MCF 10A (cell line): ENCODE measurements at regions of chr20 and their contacts with region 1.

Region 1: GRCh38 chr20:14979453-14979986 is 642.1 kb upstream of the FLRT3 start:
- DNase-seq: no peak
- H3K4me3 Mint-ChIP-seq: no peak overlapping the region
- H3K27ac Mint-ChIP-seq: no peak overlapping the region
- H3K4me1 Mint-ChIP-seq: no peaks in the 10 kb centered on the region
- H3K27me3 Mint-ChIP-seq: no peaks in the 10 kb centered on the region
- CTCF ChIP-seq: no peak

Region 2: GRCh38 chr20:14860410-14860814 is 119.1 kb before region 1 on chr20:
- CTCF ChIA-PET with region 1: no interaction called
- POLR2A ChIA-PET with region 1: no interaction called
- intact Hi-C with region 1: no loop called
- DNase-seq: peak; percentile 15
- H3K4me3 Mint-ChIP-seq: no peak overlapping the region
- H3K27ac Mint-ChIP-seq: no peak overlapping the region
- H3K4me1 Mint-ChIP-seq: peaks cover 6% of the 10 kb centered on the region
- H3K27me3 Mint-ChIP-seq: no peaks in the 10 kb centered on the region
- CTCF ChIP-seq: no peak

Region 3: GRCh38 chr20:14948423-14948822 is 31.1 kb before region 1 on chr20:
- CTCF ChIA-PET with region 1: no interaction called
- POLR2A ChIA-PET with region 1: no interaction called
- intact Hi-C with region 1: no loop called
- DNase-seq: peak; percentile 14
- H3K4me3 Mint-ChIP-seq: no peak overlapping the region
- H3K27ac Mint-ChIP-seq: no peak overlapping the region
- H3K4me1 Mint-ChIP-seq: peaks cover 14% of the 10 kb centered on the region
- H3K27me3 Mint-ChIP-seq: no peaks in the 10 kb centered on the region
- CTCF ChIP-seq: peak; percentile 24

Region 4: DNA sequence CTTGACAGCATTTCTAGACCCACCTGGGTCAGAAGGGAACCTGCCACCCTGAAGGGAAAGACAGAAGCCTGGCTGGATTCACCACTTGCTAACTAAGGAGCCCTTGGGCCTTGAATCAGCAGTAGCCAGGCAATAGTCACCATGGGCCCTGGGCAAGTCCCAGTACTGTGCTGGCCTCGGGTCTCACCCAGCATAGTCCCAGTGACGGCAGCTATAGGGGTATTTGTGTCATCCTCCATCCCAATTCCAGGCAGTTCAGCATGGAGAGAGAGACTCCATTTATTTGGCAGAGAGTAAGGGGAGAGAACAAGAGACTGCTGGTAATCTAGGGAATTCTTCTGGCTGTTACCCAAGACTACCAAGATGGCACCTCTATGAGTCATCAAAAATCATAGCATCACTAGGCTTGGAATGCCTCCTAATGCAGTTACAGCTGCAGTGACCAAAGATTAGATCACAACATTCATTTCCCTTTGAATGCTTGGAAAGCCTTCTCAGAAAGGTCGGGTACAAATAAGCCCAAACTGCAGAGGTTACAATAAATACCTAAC is 18.2 kb after region 1 on chr20:
- CTCF ChIA-PET with region 1: interaction called, 3 read pairs
- POLR2A ChIA-PET with region 1: interaction called, 32 read pairs
- intact Hi-C with region 1: no loop called
- DNase-seq: peak; percentile 90
- H3K4me3 Mint-ChIP-seq: no peak overlapping the region
- H3K27ac Mint-ChIP-seq: peak overlapping the region; percentile 54
- H3K4me1 Mint-ChIP-seq: peaks cover 21% of the 10 kb centered on the region
- H3K27me3 Mint-ChIP-seq: no peaks in the 10 kb centered on the region
- CTCF ChIP-seq: no peak

Region 5: GRCh38 chr20:15138548-15139126 is 159.1 kb after region 1 on chr20:
- CTCF ChIA-PET with region 1: no interaction called
- POLR2A ChIA-PET with region 1: no interaction called
- intact Hi-C with region 1: no loop called
- DNase-seq: no peak
- H3K4me3 Mint-ChIP-seq: no peak overlapping the region
- H3K27ac Mint-ChIP-seq: no peak overlapping the region
- H3K4me1 Mint-ChIP-seq: no peaks in the 10 kb centered on the region
- H3K27me3 Mint-ChIP-seq: no peaks in the 10 kb centered on the region
- CTCF ChIP-seq: no peak